ENCODE measurements at regions of chr12 and their contacts with region 1.

Region 1: GRCh38 chr12:116299658-116300328 is 22.3 kb upstream of the MED13L start:
- DNase-seq: no peak
- ATAC-seq: peak; percentile 51 to 85

Region 2: DNA sequence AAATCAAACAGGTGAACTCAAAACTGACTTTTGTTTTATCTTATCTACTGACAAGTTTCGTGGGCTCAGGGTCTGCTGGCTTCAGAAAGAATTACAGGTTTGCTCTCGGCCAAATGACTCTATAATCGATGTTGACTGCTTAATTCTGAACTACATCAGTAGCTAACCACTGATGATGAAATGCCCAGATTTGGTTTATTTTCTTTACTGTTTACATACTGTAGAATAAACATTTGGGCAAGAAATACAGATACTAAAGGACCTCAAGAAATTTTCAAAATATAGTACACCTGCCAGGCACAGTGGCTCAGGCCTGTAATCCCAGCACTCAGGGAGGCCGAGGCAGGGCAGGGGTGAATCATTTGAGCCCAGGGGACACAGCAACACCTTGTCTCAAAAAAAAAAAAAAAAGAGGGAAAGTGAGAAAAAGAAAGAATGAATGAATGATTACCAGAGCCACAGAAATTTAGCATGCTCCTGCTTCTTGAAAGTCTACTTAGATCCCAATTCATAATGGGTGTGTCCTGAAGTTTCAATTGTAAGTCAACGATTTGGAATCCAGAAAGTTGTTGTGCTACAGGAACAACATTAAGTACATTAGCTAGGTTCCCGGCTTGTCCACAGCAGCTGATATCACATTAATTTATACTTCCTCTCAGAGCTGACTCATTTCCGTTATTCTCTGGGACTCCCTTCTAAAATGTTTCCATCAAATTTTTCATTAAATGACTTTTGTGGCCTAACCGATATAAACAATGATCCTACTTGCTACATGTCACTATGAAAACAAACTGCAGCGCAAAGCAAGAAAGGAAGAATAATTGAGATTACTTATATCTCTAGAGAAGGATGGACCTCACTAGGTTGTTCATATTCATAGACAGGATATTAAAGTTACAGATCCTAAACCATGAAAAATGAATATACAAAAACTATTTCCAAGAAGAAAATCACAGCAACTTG is 156.6 kb before region 1 on chr12:
- intact Hi-C with region 1: no loop called
- DNase-seq: no peak
- ATAC-seq: peak in 1 of 2 donors; percentile 25

Region 3: GRCh38 chr12:116210131-116210530 is 89.7 kb before region 1 on chr12:
- intact Hi-C with region 1: no loop called
- DNase-seq: no peak
- ATAC-seq: no peak

Region 4: DNA sequence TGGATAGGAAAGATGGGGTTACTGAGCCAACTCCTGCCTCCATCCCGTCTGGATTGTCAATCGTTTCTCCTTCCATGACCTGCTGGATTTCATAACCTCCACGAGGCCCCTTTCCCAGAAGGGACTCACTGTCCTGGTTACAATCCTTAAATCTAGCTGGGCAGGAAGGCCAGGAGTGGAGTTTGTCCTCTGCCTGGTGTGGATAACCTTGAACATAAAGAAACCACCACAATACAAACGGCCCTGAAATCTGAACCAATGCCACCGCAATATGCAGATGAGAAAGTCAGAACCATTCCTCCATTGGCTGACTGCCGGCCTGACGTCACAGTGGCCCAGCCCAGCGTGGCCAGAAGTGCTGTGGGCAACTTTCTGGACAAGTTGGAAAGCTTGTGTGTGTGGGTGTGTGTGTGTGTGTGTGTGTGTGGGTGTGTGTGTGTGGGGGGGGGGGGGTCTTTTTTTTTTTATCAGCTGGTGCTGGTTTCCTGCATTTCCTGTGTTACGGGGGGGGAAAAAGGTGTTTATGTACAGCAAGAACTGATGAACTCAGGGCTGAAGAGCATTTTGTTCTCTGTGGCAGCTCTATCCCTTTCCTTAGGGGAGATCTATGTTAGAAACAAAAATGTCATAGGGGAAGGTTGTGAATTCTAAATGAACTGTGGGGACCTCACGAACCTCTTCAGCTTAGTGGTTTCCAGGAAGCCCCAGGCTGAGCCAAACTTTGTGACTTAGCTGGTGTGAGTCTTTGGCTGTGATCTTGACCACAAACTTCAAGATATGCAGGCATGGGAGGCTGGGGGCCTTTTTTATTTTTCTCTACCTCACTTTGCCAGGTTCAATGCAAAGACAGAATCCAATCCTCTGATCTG is 59.3 kb after region 1 on chr12:
- intact Hi-C with region 1: loop called in 1 of 2 experiments (anchors 10 kb)
- DNase-seq: peak; percentile 97
- ATAC-seq: peak; percentile 96 to 98